Panc1 (cell line): ENCODE measurements at regions of chr17 and their contacts with region 1.

Region 1: GRCh38 chr17:79844869-79845600 is 5.8 kb upstream of the CBX4 start:
- DNase-seq: no peak
- ATAC-seq: peak; percentile 65
- H3K4me3 ChIP-seq: peak overlapping the region; percentile 24 to 64
- H3K27ac ChIP-seq: peak overlapping the region; percentile 64
- H3K4me1 ChIP-seq: peaks cover 25% of the 10 kb centered on the region
- H3K27me3 ChIP-seq: no peaks in the 10 kb centered on the region
- CTCF ChIP-seq: peak; percentile 96

Region 2: DNA sequence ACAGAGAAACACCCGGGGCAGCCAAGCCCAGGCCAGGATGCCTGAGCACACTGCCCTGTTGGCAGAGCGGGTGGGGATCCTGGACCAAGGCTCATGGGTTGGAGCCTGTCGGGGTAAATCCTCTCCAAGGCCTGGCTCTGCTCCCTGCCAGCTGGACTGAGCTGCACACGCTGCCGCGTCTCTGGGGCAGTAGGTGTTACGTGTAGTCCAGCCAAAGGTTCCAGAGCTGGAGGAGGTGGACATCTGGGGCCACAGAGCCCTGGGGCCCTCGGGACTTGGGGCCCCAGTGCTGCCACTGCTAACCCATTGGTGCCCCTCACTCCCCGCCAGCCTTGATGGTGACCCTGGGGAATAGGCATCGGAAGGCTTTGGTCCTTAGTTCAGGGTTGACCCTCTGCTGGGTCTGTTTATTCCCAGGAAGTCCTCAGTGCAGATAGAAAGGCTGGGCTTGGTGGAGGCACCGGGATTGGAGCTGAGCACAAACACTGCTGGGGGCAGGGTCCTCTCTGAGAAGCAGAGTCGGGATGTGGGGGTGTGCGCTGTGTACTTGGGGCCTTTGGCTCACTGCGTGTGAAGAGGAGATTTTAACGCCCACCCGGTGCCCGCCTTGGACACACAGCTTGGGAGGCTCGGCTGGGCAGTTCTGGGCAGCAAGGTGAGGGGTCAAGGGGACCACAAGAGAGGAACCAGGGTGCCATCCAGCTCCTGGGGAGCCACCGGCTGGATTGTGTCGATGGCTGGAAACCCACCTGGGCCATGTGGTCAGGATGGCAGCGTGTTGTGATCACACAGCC is 10.5 kb after region 1 on chr17:
- CTCF ChIA-PET with region 1: interaction called, 11 read pairs
- POLR2A ChIA-PET with region 1: no interaction called
- in situ Hi-C with region 1: no loop called
- intact Hi-C with region 1: no loop called
- DNase-seq: no peak
- ATAC-seq: no peak
- H3K4me3 ChIP-seq: no peak overlapping the region
- H3K27ac ChIP-seq: no peak overlapping the region
- H3K4me1 ChIP-seq: no peaks in the 10 kb centered on the region
- H3K27me3 ChIP-seq: no peaks in the 10 kb centered on the region
- CTCF ChIP-seq: no peak

Region 3: DNA sequence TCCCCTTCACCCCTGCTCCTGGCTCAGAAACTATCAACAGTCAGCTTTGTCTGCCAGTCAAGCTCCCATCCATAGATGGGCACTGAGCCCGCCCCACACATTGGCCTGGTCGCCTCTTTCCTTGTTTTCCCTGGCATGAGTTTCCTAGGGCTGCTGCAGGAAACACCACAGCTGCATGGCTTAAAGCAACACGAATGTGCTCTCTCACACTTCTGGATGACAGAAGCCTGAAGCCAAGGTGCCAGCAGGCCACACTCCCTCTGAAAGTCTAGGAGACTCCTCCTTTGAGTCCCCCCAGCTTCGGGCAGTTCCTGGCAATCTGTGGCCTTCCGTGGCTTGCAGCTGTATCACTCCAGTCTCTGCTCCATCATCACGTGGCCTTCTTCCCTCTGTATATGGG is 120.8 kb after region 1 on chr17:
- CTCF ChIA-PET with region 1: no interaction called
- POLR2A ChIA-PET with region 1: no interaction called
- in situ Hi-C with region 1: no loop called
- intact Hi-C with region 1: no loop called
- DNase-seq: no peak
- ATAC-seq: no peak
- H3K4me3 ChIP-seq: no peak overlapping the region
- H3K27ac ChIP-seq: no peak overlapping the region
- H3K4me1 ChIP-seq: no peaks in the 10 kb centered on the region
- H3K27me3 ChIP-seq: no peaks in the 10 kb centered on the region
- CTCF ChIP-seq: no peak